K562 (cell line): ENCODE measurements at regions of chr10 and their contacts with region 1.

Region 1: GRCh38 chr10:5629303-5630111 is 36.9 kb downstream of the ASB13 start:
- DNase-seq: peak; percentile 80 to 86 (median 81)
- ATAC-seq: peak; percentile 96
- H3K4me3 ChIP-seq: no peak overlapping the region
- H3K27ac ChIP-seq: no peak overlapping the region
- H3K4me1 ChIP-seq: peaks cover 0 to 6% of the 10 kb centered on the region in 2 experiments; a peak in 1 of 5 replicates
- H3K27me3 ChIP-seq: peaks cover 5 to 24% of the 10 kb centered on the region in 2 experiments; a peak in 4 of 5 replicates
- CTCF ChIP-seq: peak; percentile 92 to 98 (median 94)
- EP300 ChIP-seq: no peak
- POLR2A ChIP-seq: no peak
- RAD21 ChIP-seq: peak; percentile 56 to 76

Region 2: GRCh38 chr10:5525561-5526341 is 103.8 kb before region 1 on chr10:
- CTCF ChIA-PET with region 1: no interaction called
- POLR2A ChIA-PET with region 1: no interaction called
- in situ Hi-C with region 1: no loop called
- intact Hi-C with region 1: no loop called
- DNase-seq: no peak
- ATAC-seq: no peak
- H3K4me3 ChIP-seq: no peak overlapping the region
- H3K27ac ChIP-seq: no peak overlapping the region
- H3K4me1 ChIP-seq: peaks cover 5 to 32% of the 10 kb centered on the region in 2 experiments; a peak in 4 of 5 replicates
- H3K27me3 ChIP-seq: no peaks in the 10 kb centered on the region
- CTCF ChIP-seq: no peak
- EP300 ChIP-seq: no peak
- POLR2A ChIP-seq: no peak
- RAD21 ChIP-seq: no peak

Region 3: GRCh38 chr10:5737352-5737751 is 107.8 kb after region 1 on chr10:
- CTCF ChIA-PET with region 1: no interaction called
- POLR2A ChIA-PET with region 1: no interaction called
- in situ Hi-C with region 1: no loop called
- intact Hi-C with region 1: loop called (anchors 10 kb)
- DNase-seq: no peak
- ATAC-seq: peak; percentile 61
- H3K4me3 ChIP-seq: no peak overlapping the region
- H3K27ac ChIP-seq: no peak overlapping the region
- H3K4me1 ChIP-seq: no peaks in the 10 kb centered on the region
- H3K27me3 ChIP-seq: no peaks in the 10 kb centered on the region
- CTCF ChIP-seq: 0 out of 6 replicates have a peak, but pooled peaks of 2 of the 3 experiments have one; percentile 8 to 12
- EP300 ChIP-seq: no peak
- POLR2A ChIP-seq: no peak
- RAD21 ChIP-seq: no peak

Region 4: GRCh38 chr10:5818894-5819293 is 189.4 kb after region 1 on chr10:
- CTCF ChIA-PET with region 1: no interaction called
- POLR2A ChIA-PET with region 1: no interaction called
- in situ Hi-C with region 1: no loop called
- intact Hi-C with region 1: no loop called
- DNase-seq: no peak
- ATAC-seq: no peak
- H3K4me3 ChIP-seq: no peak overlapping the region
- H3K27ac ChIP-seq: no peak overlapping the region
- H3K4me1 ChIP-seq: peaks cover 8 to 18% of the 10 kb centered on the region in 2 experiments
- H3K27me3 ChIP-seq: no peaks in the 10 kb centered on the region
- CTCF ChIP-seq: no peak
- EP300 ChIP-seq: no peak
- POLR2A ChIP-seq: no peak
- RAD21 ChIP-seq: no peak